ENCODE measurements at regions of chr12 and their contacts with region 1.

Region 1: DNA sequence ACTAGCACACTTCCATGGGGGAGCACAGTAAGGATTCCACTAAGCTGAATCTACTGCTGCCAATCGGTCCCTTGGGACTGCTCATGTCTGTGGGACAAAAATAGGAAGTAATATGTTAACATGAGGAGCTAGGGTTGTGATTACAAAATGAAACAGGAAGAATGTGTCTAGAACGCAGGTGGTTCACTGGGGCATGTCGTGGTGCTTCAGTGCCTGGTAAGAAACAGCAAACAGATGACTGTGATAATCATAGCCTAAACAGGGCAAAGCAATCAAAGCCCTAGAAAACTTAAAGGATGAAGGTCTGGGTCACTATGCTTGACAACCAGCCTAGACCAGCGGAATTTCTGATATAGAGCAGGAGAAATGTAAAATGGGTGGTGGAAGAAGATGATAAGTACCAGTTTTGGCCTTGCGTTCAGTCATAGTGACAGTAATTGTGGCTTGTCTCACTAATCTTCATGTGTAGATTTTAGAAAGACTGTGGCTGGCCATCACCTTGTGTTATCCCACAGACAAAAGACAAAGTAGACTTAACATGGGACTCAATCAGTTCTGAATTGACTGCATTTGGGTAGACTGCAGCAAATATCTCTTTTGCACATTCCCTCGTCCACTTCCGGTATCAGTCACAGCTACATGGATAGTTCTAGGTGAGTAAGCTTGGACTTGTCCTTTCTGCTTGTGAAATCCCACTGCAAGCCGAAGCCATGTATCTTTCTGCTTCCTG is 51.4 kb downstream of the WASHC3 start:
- DNase-seq: peak; percentile 90
- ATAC-seq: peak; percentile 97
- H3K4me3 ChIP-seq: peak overlapping the region in 3 of 5 experiments; percentile 16 to 43 (median 20)
- H3K4me3 Mint-ChIP-seq: peak overlapping the region; percentile 73
- H3K27ac ChIP-seq: peak overlapping the region; percentile 55 to 79
- H3K27ac Mint-ChIP-seq: peak overlapping the region; percentile 91
- H3K4me1 ChIP-seq: peaks cover 20 to 22% of the 10 kb centered on the region in 2 donors
- H3K4me1 Mint-ChIP-seq: peaks cover 35% of the 10 kb centered on the region
- H3K27me3 ChIP-seq: no peaks in the 10 kb centered on the region
- H3K27me3 Mint-ChIP-seq: no peaks in the 10 kb centered on the region
- CTCF ChIP-seq: no peak

Region 2: GRCh38 chr12:101839324-101840283 is 170.8 kb before region 1 on chr12:
- CTCF ChIA-PET with region 1: no interaction called
- POLR2A ChIA-PET with region 1: no interaction called
- intact Hi-C with region 1: no loop called
- DNase-seq: peak; percentile 80
- ATAC-seq: peak; percentile 72
- H3K4me3 ChIP-seq: no peak overlapping the region
- H3K4me3 Mint-ChIP-seq: no peak overlapping the region
- H3K27ac ChIP-seq: peak overlapping the region in 1 of 2 donors; percentile 59
- H3K27ac Mint-ChIP-seq: no peak overlapping the region
- H3K4me1 ChIP-seq: peaks cover 17 to 18% of the 10 kb centered on the region in 2 donors
- H3K4me1 Mint-ChIP-seq: peaks cover 19% of the 10 kb centered on the region
- H3K27me3 ChIP-seq: no peaks in the 10 kb centered on the region
- H3K27me3 Mint-ChIP-seq: no peaks in the 10 kb centered on the region
- CTCF ChIP-seq: peak; percentile 93

Region 3: GRCh38 chr12:101876861-101877815 is 133.3 kb before region 1 on chr12 and contains the start of gene DRAM1:
- CTCF ChIA-PET with region 1: no interaction called
- POLR2A ChIA-PET with region 1: no interaction called
- intact Hi-C with region 1: loop called (anchors 1 kb)
- DNase-seq: peak; percentile 90
- ATAC-seq: peak; percentile 87
- H3K4me3 ChIP-seq: peak within 1 kb of the TSS; percentile 80 to 92 (median 86)
- H3K4me3 Mint-ChIP-seq: peak within 1 kb of the TSS; percentile 90
- H3K27ac ChIP-seq: peak within 1 kb of the TSS; percentile 84 to 85
- H3K27ac Mint-ChIP-seq: peak within 1 kb of the TSS; percentile 88
- H3K4me1 ChIP-seq: peaks cover 6 to 14% of the 10 kb centered on the region in 2 donors
- H3K4me1 Mint-ChIP-seq: peaks cover 20% of the 10 kb centered on the region
- H3K27me3 ChIP-seq: no peaks in the 10 kb centered on the region
- H3K27me3 Mint-ChIP-seq: no peaks in the 10 kb centered on the region
- CTCF ChIP-seq: peak; percentile 25
- total RNA-seq, gene DRAM1: 7.9 and 10.2 TPM in 2 replicates

Region 4: DNA sequence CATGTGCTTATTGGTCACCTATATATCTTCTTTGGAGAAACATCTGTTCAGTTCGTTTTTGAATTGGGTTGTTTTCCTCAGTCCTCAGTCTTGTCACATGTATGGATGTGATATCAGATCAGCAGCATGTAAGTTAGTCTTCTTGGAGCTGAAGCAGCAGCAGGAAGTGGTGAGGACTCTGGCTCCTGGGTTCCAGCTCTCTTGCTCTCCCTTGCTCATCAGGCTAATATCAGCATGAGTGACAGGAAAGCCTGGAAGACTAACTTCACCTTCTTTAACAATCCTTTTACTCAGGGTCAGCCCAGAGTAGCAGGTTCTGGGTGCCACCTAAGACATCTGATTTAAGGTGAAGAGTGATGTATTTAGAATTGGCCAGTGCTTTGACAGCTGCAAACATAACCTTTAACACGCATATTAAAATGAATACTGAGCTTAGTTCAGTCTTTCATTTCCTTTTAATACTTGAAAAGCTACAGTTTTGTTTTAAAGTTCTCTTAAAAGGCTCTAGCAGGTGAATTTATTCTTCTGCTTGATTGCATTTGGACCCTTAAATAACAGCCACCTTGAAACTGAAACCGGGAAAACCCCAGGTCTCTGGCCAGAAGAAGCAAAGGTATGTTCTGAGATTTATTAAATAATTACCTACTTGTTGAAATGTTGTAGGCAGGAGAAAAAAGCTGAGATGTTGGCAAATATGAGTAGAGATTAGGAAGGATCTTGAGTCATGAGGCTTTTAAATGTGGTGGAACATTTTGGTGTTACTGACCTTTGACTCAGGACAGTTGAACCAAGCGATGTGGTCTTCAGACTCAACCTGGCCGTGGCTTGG is 78.7 kb before region 1 on chr12:
- CTCF ChIA-PET with region 1: no interaction called
- POLR2A ChIA-PET with region 1: interaction called, 3 read pairs
- intact Hi-C with region 1: loop called (anchors 2 kb)
- DNase-seq: peak; percentile 83
- ATAC-seq: peak; percentile 68
- H3K4me3 ChIP-seq: peak overlapping the region in 3 of 5 experiments; percentile 3 to 41 (median 25)
- H3K4me3 Mint-ChIP-seq: peak overlapping the region; percentile 33
- H3K27ac ChIP-seq: peak overlapping the region; percentile 81 to 93
- H3K27ac Mint-ChIP-seq: peak overlapping the region; percentile 88
- H3K4me1 ChIP-seq: peaks cover 76 to 79% of the 10 kb centered on the region in 2 donors
- H3K4me1 Mint-ChIP-seq: peaks cover 79% of the 10 kb centered on the region
- H3K27me3 ChIP-seq: no peaks in the 10 kb centered on the region
- H3K27me3 Mint-ChIP-seq: no peaks in the 10 kb centered on the region
- CTCF ChIP-seq: no peak

Region 5: GRCh38 chr12:102033991-102034745 is 23.7 kb after region 1 on chr12:
- CTCF ChIA-PET with region 1: no interaction called
- POLR2A ChIA-PET with region 1: interaction called, 10 read pairs
- intact Hi-C with region 1: no loop called
- DNase-seq: no peak
- ATAC-seq: no peak
- H3K4me3 ChIP-seq: no peak overlapping the region
- H3K4me3 Mint-ChIP-seq: no peak overlapping the region
- H3K27ac ChIP-seq: no peak overlapping the region
- H3K27ac Mint-ChIP-seq: no peak overlapping the region
- H3K4me1 ChIP-seq: no peaks in the 10 kb centered on the region
- H3K4me1 Mint-ChIP-seq: no peaks in the 10 kb centered on the region
- H3K27me3 ChIP-seq: no peaks in the 10 kb centered on the region
- H3K27me3 Mint-ChIP-seq: no peaks in the 10 kb centered on the region
- CTCF ChIP-seq: no peak

Region 6: DNA sequence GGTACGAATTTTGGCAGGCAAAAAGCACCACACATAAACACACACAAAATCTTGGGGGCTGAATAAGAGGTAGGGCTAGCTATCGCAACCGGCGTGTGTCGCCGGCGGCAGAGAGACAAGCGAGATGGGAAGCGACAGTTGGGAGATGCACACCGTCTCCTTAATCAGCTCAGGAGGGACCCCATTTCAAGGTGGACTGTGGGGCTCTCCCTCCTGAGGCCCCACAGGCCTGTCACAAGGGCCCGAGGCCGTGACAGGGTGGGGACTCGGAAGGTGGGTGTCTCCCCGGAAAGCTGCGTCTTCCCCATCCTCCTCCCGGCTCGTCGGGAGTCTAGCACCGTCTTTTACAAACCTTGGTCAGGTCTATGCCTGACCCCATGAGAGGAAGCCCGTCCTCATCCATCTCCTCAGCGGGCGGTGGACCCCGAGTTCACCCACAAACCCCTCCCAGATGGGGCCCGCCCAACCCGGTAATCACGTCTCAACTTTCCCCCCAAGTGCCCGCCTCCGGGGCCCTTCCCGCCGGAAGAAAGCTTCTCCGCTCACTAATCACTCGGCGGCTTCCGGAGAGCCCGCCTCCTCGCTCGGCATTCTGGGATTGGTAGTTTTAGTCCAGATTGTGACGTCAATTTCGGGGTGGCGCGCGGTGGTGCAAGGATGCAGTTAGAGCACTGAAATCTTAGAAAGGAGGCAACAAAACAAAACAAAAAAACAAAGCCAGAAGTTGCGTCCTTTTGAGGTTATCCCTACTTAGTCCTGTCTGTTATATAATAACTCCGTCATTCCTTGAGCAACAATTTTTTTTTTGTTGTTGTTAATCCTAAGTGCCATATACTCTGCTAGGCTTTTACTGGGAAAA is 51.4 kb after region 1 on chr12 and contains the start of gene WASHC3:
- CTCF ChIA-PET with region 1: no interaction called
- POLR2A ChIA-PET with region 1: interaction called, 4 read pairs
- intact Hi-C with region 1: loop called (anchors 1 kb)
- DNase-seq: peak; percentile 95
- ATAC-seq: peak; percentile 96
- H3K4me3 ChIP-seq: peak within 1 kb of the TSS; percentile 72 to 92 (median 89)
- H3K4me3 Mint-ChIP-seq: peak within 1 kb of the TSS; percentile 95
- H3K27ac ChIP-seq: peak within 1 kb of the TSS; percentile 93 to 96
- H3K27ac Mint-ChIP-seq: peak within 1 kb of the TSS; percentile 96
- H3K4me1 ChIP-seq: peaks cover 5 to 12% of the 10 kb centered on the region in 2 donors
- H3K4me1 Mint-ChIP-seq: peaks cover 27% of the 10 kb centered on the region
- H3K27me3 ChIP-seq: peaks cover 0 to 4% (median 0%) of the 10 kb centered on the region in 4 experiments
- H3K27me3 Mint-ChIP-seq: no peaks in the 10 kb centered on the region
- CTCF ChIP-seq: no peak
- total RNA-seq, gene WASHC3: 52.8 and 55.8 TPM in 2 replicates

Region 7: DNA sequence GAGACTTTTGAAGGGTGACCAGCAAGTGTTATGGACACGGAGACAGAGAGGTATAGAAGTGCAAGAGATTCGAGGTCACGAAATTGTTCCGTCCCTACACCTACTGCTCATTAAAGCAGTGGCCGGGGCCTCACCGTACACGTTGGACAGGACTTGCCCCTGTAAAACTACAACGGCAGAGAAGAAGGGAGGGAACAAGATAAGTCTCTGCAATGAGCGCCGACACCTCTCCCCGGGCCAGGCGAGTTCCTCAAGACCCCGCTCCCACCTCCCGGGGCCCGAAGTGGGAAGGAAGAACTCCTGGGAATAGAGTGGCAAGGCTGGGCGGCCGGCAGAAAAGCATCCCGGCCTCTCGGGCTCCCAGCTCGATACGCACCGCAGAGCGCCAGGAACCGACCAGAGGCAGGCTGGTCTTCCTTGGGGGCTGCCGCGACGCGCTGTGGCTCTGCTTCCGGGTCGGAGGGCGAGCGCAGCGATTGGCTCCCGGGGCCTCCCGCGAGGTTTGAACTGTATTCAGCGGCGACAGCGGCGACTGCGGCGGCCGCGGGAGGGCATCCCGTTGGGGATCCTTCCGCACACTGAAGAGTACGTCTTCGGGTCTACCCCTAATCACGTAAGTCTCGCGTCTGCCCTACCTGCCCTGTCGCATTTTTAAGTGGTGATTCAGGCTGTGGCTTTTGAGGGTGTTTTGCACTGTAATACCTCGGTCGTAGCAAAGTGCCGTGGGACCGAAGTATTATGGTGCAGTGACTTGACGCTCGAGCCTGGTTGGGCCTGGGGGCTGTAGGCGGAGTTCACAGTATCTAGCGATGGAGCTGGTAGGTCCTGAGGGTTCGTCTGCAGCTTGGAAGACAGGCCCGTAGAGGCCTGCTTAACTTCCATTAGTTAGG is 109.5 kb after region 1 on chr12 and contains the starts of genes NUP37 and PARPBP:
- CTCF ChIA-PET with region 1: no interaction called
- POLR2A ChIA-PET with region 1: no interaction called
- intact Hi-C with region 1: loop called (anchors 1 kb)
- DNase-seq: peak; percentile 92
- ATAC-seq: peak; percentile 98
- H3K4me3 ChIP-seq: peak within 1 kb of the TSS; percentile 82 to 90 (median 84)
- H3K4me3 Mint-ChIP-seq: peak within 1 kb of the TSS; percentile 89
- H3K27ac ChIP-seq: peak within 1 kb of the TSS; percentile 80 to 88
- H3K27ac Mint-ChIP-seq: peak within 1 kb of the TSS; percentile 91
- H3K4me1 ChIP-seq: peaks cover 15 to 18% of the 10 kb centered on the region in 2 donors
- H3K4me1 Mint-ChIP-seq: peaks cover 16% of the 10 kb centered on the region
- H3K27me3 ChIP-seq: no peaks in the 10 kb centered on the region
- H3K27me3 Mint-ChIP-seq: no peaks in the 10 kb centered on the region
- CTCF ChIP-seq: no peak
- total RNA-seq, gene NUP37: 19.1 and 22.1 TPM in 2 replicates
- total RNA-seq, gene PARPBP: 5.2 and 6.6 TPM in 2 replicates

Measured in B cell (primary cell).